ENCODE measurements at regions of chr15 and their contacts with region 1.

Region 1: GRCh38 chr15:40893733-40894688 is at the start of gene VPS18:
- DNase-seq: peak; percentile 99
- ATAC-seq: peak; percentile 92
- H3K4me3 Mint-ChIP-seq: peak within 1 kb of the TSS; percentile 97
- H3K27ac Mint-ChIP-seq: peak within 1 kb of the TSS; percentile 99
- H3K4me1 Mint-ChIP-seq: peaks cover 13% of the 10 kb centered on the region
- H3K27me3 Mint-ChIP-seq: peaks cover 17% of the 10 kb centered on the region
- CTCF ChIP-seq: peak; percentile 96
- total RNA-seq, gene VPS18: 22.0 to 27.3 TPM (median 24.1 TPM) in 3 replicates

Region 2: GRCh38 chr15:40743921-40744814 is 149.8 kb before region 1 on chr15:
- CTCF ChIA-PET with region 1: interaction called, 38 read pairs
- POLR2A ChIA-PET with region 1: interaction called, 3 read pairs
- DNase-seq: no peak
- ATAC-seq: peak; percentile 56
- H3K4me3 Mint-ChIP-seq: no peak overlapping the region
- H3K27ac Mint-ChIP-seq: no peak overlapping the region
- H3K4me1 Mint-ChIP-seq: peaks cover 19% of the 10 kb centered on the region
- H3K27me3 Mint-ChIP-seq: no peaks in the 10 kb centered on the region
- CTCF ChIP-seq: no peak

Region 3: DNA sequence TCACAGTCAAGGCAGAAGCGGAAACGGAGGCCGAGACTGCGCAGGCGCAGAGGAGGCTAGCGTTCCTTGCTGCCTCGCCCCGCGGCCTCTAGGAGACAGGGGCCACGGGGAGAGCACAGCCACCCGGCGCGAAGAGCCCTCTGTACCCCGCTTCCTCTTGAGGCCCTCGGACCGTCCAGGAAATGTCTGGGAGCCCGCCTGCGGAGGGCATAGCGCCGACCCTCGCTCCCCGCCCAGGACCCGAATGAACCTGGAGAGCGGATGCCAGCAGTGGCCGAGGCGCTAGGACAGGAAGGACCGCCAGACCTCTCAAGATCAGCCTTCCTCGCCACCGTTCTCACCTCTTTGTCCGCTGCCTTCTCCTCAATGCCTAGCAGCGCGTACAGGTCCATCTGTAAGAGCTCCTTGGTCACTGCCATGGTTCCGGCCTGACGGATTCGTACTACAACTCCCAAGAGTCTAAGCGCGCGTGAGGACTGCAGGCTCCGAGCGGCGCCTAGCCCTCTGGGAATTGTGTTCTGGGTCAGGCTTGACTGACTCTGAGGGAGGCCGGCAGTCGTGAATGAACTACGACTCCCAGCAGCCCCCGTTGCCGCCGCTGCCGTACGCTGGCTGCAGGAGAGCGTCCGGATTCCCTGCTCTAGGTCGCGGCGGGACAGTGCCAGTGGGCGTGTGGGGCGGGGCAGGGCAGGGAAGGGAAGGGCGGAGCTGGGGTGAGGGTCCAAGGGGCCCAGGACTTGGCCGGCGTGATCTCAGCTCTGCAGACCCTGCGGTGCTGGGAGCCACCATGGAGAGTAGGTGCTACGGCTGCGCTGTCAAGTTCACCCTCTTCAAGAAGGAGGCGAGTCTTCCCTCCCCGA is 86.8 kb before region 1 on chr15 and contains the starts of genes DNAJC17 and ZFYVE19:
- CTCF ChIA-PET with region 1: interaction called, 14 read pairs
- POLR2A ChIA-PET with region 1: no interaction called
- DNase-seq: peak; percentile 97
- ATAC-seq: peak; percentile 99
- H3K4me3 Mint-ChIP-seq: peak within 1 kb of the TSS; percentile 98
- H3K27ac Mint-ChIP-seq: peak within 1 kb of the TSS; percentile 97
- H3K4me1 Mint-ChIP-seq: peaks cover 22% of the 10 kb centered on the region
- H3K27me3 Mint-ChIP-seq: no peaks in the 10 kb centered on the region
- CTCF ChIP-seq: no peak
- total RNA-seq, gene DNAJC17: 49.8 to 53.0 TPM (median 50.2 TPM) in 3 replicates
- total RNA-seq, gene ZFYVE19: 17.3 to 18.9 TPM (median 17.6 TPM) in 3 replicates

Region 4: GRCh38 chr15:40819048-40819447 is 75.0 kb before region 1 on chr15:
- CTCF ChIA-PET with region 1: no interaction called
- POLR2A ChIA-PET with region 1: no interaction called
- DNase-seq: no peak
- ATAC-seq: no peak
- H3K4me3 Mint-ChIP-seq: no peak overlapping the region
- H3K27ac Mint-ChIP-seq: no peak overlapping the region
- H3K4me1 Mint-ChIP-seq: no peaks in the 10 kb centered on the region
- H3K27me3 Mint-ChIP-seq: no peaks in the 10 kb centered on the region; the same call in 1 of the 2 replicates
- CTCF ChIP-seq: no peak

Region 5: GRCh38 chr15:40857601-40858341 is 36.2 kb before region 1 on chr15:
- CTCF ChIA-PET with region 1: interaction called, 500 read pairs
- POLR2A ChIA-PET with region 1: interaction called, 11 read pairs
- DNase-seq: peak; percentile 88
- ATAC-seq: peak; percentile 79
- H3K4me3 Mint-ChIP-seq: no peak overlapping the region
- H3K27ac Mint-ChIP-seq: peak overlapping the region; percentile 94
- H3K4me1 Mint-ChIP-seq: peaks cover 22% of the 10 kb centered on the region
- H3K27me3 Mint-ChIP-seq: no peaks in the 10 kb centered on the region
- CTCF ChIP-seq: peak; percentile 93

Region 6: DNA sequence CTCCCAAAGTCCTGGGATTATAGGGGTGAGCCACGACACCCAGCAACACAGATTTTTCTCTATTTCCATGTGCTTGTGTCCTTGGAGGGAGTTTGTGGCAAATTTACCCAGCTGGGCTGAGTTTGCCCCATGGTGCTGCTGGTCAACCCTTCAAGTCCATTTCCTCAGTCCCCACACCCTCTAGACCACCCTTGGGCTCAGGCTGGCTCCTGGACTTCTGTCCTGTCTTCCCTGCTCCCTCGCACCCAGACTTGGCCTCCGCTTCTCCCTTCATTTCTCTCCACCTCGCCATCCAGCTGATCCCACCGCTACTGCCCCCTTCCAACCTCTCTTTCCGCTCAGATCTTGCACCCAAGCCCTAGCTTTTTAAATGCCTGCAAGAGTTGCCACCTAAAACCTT is 12.7 kb before region 1 on chr15:
- CTCF ChIA-PET with region 1: interaction called, 115 read pairs
- POLR2A ChIA-PET with region 1: no interaction called
- DNase-seq: no peak
- ATAC-seq: no peak
- H3K4me3 Mint-ChIP-seq: no peak overlapping the region
- H3K27ac Mint-ChIP-seq: no peak overlapping the region
- H3K4me1 Mint-ChIP-seq: peaks cover 7% of the 10 kb centered on the region
- H3K27me3 Mint-ChIP-seq: no peaks in the 10 kb centered on the region
- CTCF ChIP-seq: no peak

Region 7: DNA sequence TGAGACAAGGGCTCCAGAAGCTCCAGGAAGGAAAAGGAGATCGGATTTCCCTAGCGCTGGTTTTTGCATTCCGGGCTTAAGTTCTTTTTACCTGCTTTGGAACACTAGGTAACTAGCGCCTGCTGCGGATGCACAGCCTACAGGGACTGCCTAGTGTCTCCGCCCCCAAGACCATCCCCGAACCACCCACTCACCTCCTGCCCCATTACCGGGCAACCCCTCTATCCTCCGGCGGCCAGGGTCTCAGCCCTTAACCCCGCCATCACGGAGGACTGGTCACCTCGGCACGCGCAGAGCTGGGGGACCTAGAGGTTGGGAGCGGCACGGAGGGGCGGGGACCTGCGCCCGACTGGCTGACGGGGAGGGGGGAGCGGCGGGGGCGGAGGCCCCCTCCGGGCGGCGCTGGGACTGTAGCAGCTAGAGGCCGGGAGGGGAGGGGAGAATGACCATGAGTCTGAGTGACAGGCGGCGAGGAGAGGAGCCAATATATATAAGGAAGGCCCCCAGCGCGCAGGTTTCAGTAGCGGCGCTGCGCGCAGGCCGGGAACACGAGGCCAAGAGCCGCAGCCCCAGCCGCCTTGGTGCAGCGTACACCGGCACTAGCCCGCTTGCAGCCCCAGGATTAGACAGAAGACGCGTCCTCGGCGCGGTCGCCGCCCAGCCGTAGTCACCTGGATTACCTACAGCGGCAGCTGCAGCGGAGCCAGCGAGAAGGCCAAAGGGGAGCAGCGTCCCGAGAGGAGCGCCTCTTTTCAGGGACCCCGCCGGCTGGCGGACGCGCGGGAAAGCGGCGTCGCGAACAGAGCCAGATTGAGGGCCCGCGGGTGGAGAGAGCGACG is 35.0 kb after region 1 on chr15 and contains the start of gene DLL4:
- CTCF ChIA-PET with region 1: interaction called, 17 read pairs
- POLR2A ChIA-PET with region 1: no interaction called
- DNase-seq: peak; percentile 84
- ATAC-seq: peak; percentile 45
- H3K4me3 Mint-ChIP-seq: peak within 1 kb of the TSS; percentile 80
- H3K27ac Mint-ChIP-seq: no peak within 1 kb of the TSS
- H3K4me1 Mint-ChIP-seq: peaks cover 30% of the 10 kb centered on the region
- H3K27me3 Mint-ChIP-seq: peaks cover 97% of the 10 kb centered on the region
- CTCF ChIP-seq: no peak
- total RNA-seq, gene DLL4: 0.94 to 1.6 TPM (median 1.1 TPM) in 3 replicates

Measured in WTC11 (cell line).